ENCODE measurements at regions of chr2 and their contacts with region 1.

Region 1: DNA sequence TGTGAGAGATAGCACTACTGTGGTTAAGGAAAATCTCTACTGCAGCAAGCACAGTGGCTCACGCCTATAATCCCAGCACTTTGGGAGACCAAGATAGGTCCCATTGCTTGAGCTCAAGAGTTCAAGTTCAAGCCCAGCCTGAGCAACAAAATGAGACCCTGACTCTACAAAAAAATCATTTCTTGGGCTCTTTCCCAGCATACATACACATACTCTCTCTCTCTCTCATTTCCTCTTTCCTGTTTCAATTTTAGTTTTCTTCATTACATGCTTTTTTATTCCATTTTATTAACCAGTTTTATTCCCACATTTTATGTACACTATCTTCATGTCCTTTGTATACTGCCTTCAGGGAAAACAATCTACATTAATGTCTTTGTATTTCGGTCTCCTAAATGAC is 14.6 kb downstream of the WDR33 start:
- DNase-seq: no peak
- H3K4me3 ChIP-seq: no peak overlapping the region
- H3K27ac ChIP-seq: peak overlapping the region; percentile 12
- H3K4me1 ChIP-seq: peaks cover 46% of the 10 kb centered on the region
- CTCF ChIP-seq: no peak

Region 2: DNA sequence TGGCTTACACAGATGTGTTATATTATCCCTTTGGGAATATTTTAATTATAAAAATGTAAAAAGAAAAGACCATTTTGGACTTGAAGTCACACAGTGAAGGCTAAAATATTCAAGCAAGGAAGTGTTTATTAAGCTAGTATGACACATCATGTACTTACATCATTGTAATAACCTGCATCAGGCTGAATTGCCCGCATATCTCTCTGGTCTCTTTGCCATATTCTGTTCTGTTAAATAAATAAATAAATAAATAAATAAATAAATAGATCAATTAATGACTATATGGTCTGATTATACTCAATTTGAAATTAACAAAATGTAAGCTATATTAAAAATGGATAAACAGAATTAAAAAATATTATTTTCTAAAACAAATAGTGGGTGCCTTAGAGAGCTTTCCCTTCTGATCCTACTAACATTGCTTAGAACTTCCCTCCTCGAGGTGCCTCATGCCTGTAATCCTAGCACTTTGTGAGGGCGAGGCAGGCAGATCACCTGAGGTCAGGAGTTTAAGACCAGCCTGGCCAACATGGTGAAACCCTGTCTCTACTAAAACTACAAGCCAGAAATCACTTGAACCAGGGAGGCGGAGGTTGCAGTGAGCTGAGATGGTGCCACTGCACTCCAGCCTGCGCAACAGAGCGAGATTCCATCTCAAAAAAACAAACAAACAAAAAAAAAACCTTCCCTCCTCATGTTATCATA is 27.5 kb before region 1 on chr2:
- CTCF ChIA-PET with region 1: no interaction called
- POLR2A ChIA-PET with region 1: interaction called, 10 read pairs
- intact Hi-C with region 1: no loop called
- DNase-seq: no peak
- H3K4me3 ChIP-seq: no peak overlapping the region
- H3K27ac ChIP-seq: no peak overlapping the region
- H3K4me1 ChIP-seq: peaks cover 12% of the 10 kb centered on the region
- CTCF ChIP-seq: no peak

Region 3: GRCh38 chr2:127783101-127783500 is 13.3 kb before region 1 on chr2:
- CTCF ChIA-PET with region 1: interaction called, 3 read pairs
- POLR2A ChIA-PET with region 1: interaction called, 5 read pairs
- intact Hi-C with region 1: loop called (anchors 1 kb)
- DNase-seq: no peak
- H3K4me3 ChIP-seq: no peak overlapping the region
- H3K27ac ChIP-seq: no peak overlapping the region
- H3K4me1 ChIP-seq: peaks cover 6% of the 10 kb centered on the region
- CTCF ChIP-seq: no peak

Measured in OCI-LY7 (cell line).